Ascending aorta (tissue), 2 donors: ENCODE measurements at regions of chr2 and their contacts with region 1.

Region 1: DNA sequence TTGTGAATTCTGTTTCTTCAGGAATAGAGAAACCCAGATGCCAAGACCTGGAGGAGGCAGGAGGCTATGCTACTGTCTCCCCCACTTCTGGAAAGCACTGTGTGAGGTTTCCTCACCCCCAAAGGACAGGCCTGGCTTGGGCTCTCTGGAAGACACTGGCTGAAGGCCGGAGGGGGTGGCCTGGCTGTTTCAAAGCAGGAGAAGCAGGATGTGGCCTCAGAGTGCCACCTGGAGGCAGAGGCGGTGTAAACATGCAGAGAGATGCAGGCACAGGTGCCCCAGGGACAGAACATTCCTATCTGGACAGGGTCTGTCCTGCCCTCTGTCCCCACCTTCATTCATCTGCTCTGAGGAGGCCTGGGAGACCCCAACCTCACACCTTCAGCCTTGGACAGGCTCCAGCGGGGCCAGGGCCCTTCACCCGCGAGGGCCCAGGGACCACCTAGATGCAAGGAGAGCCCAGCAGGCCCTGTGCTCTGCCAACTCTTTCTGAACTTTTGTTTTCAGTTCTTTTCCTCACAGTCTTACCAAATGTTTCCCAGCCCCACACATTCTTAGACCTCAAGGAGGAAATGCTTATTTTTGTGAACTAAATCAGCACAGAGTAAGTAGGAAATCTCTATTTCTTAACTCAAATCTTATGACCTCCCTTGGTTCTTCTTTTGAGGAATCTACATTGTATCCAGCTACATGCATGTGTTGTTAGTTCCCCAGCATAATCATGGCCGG is 79.2 kb downstream of the LONRF2 start:
- DNase-seq: peak in 1 of 2 donors; percentile 78
- H3K4me3 ChIP-seq: no peak overlapping the region
- H3K27ac ChIP-seq: no peak overlapping the region
- H3K4me1 ChIP-seq: no peaks in the 10 kb centered on the region
- H3K27me3 ChIP-seq: no peaks in the 10 kb centered on the region
- CTCF ChIP-seq: peak; percentile 54 to 74 (median 63)

Region 2: GRCh38 chr2:99836690-99837605 is 406.1 kb before region 1 on chr2:
- intact Hi-C with region 1: loop called (anchors 10 kb)
- DNase-seq: no peak
- H3K4me3 ChIP-seq: no peak overlapping the region
- H3K27ac ChIP-seq: no peak overlapping the region
- H3K4me1 ChIP-seq: no peaks in the 10 kb centered on the region
- H3K27me3 ChIP-seq: no peaks in the 10 kb centered on the region
- CTCF ChIP-seq: no peak

Region 3: GRCh38 chr2:100334929-100335328 is 91.9 kb after region 1 on chr2:
- intact Hi-C with region 1: no loop called
- DNase-seq: no peak
- H3K4me3 ChIP-seq: no peak overlapping the region
- H3K27ac ChIP-seq: no peak overlapping the region
- H3K4me1 ChIP-seq: no peaks in the 10 kb centered on the region
- H3K27me3 ChIP-seq: no peaks in the 10 kb centered on the region
- CTCF ChIP-seq: no peak